Activated CD4-positive, alpha-beta T cell treated with anti-CD3 and anti-CD28 coated beads, Interleukin-2, amount 10 ng/mL, durations not matched to agents 24 days and 14 days (primary cell): ENCODE measurements at regions of chr6 and their contacts with region 1.

Region 1: DNA sequence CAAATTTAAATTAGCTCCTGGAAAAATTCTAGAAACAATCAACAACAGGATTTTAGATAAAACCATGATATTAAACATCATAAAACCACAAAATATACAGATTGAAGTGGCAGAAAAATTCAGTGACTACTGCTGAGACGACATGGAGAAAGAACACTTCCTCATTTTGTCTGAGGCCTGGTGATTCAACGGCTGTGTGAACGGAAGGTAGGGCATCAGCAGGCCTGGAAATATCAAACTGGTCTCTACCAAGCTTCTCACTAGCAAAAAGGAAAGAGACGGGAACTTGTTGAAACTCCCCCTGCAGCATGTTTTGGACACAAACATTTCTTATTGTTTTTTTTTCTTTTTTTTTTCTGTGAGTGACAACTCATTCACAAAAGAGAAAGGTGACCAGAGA is 58.0 kb upstream of the AHI1 start:
- DNase-seq: no peak
- H3K4me3 Mint-ChIP-seq: no peak overlapping the region
- H3K27ac Mint-ChIP-seq: no peak overlapping the region
- H3K4me1 Mint-ChIP-seq: peaks cover 30% of the 10 kb centered on the region
- H3K27me3 Mint-ChIP-seq: no peaks in the 10 kb centered on the region

Region 2: GRCh38 chr6:135577059-135577538 is 21.5 kb after region 1 on chr6:
- intact Hi-C with region 1: loop called (anchors 2 kb)
- DNase-seq: peak; percentile 74
- H3K4me3 Mint-ChIP-seq: peak overlapping the region; percentile 39
- H3K27ac Mint-ChIP-seq: peak overlapping the region; percentile 96
- H3K4me1 Mint-ChIP-seq: peaks cover 45% of the 10 kb centered on the region
- H3K27me3 Mint-ChIP-seq: no peaks in the 10 kb centered on the region

Region 3: DNA sequence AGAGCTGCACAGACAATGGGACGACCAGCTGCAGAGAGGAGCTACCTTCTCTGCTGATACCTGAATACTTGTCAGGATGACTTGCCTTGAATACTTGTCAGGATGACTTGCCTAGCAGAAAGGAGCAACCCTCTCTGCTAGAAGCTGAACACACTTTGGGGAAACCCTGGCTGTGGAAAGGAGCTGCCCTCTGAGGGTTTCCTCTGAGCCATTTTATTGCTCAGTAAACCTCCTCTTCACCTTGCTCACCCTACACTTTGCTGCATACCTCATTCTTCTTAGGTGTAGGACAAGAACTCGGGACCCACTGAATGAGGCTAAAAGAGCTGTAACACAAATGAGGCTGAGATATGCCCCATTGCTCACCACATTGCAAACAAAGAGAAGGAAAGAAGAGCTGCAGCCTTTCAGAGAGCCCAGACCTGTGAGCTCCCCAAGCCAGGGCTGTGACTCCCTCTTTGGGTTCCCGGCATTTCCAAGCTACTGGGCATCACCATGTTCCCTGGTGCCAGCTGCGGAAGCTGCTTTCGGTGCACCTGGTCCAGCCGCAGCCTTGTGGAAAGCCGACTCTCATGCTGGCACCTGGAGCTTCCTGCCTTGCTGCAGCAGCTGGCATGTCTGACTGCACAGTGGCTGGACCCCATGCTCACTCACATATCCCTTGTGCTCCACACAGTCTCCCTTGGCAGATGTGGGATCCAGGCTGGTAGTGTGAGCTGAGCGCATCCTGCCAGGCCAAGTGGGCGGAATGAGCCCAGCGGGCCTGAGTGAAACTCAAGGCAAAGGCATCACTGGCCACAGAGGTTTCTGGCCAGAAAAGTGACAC is 48.7 kb after region 1 on chr6:
- intact Hi-C with region 1: no loop called
- DNase-seq: peak; percentile 56
- H3K4me3 Mint-ChIP-seq: no peak overlapping the region
- H3K27ac Mint-ChIP-seq: peak overlapping the region; percentile 90
- H3K4me1 Mint-ChIP-seq: peaks cover 31% of the 10 kb centered on the region
- H3K27me3 Mint-ChIP-seq: no peaks in the 10 kb centered on the region